HepG2 (cell line): ENCODE measurements at regions of chr10 and their contacts with region 1.

Region 1: GRCh38 chr10:93288654-93289634 is 193.2 kb downstream of the MYOF start:
- DNase-seq: peak; percentile 74
- ATAC-seq: peak; percentile 90
- H3K4me3 ChIP-seq: no peak overlapping the region
- H3K27ac ChIP-seq: no peak overlapping the region
- H3K4me1 ChIP-seq: no peaks in the 10 kb centered on the region
- H3K27me3 ChIP-seq: peaks cover 0 to 2% of the 10 kb centered on the region in 2 experiments; a peak in 1 of 5 replicates
- CTCF ChIP-seq: peak; percentile 91
- EP300 ChIP-seq: no peak
- POLR2A ChIP-seq: no peak
- RAD21 ChIP-seq: peak; percentile 86

Region 2: DNA sequence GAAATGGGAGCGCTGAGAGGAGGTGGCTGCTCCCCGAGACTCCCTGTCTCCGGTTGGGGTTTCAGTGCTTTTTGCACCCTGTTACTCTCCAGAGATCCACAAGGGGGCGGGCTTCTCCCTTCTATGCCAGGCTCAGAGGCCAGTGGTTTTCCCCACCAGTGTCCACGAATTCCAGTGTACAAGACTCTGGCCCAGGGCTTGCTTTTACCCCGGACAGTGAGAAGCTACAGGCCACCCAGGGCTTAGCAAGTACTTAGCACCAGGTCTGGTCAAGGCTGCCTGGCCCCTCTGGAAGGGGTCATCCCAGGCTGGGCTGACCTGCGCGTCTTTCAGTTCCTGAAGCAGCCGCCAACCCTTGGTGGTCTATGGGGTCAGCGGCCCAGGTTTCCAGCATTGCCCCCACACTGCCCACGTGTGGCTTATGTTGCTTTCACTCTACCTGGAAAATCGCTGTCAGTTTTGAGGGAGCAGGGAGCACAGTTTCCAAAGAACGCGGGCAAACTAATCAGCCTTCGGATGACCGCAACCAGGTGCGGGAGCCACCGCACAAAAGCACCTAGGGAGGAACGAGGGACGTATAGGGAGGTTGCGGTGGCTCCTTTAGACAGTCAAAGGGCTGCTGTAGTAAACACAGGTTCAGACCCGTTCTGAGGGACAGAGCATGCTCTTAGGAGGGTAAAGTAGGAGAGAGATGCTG is 208.4 kb before region 1 on chr10:
- CTCF ChIA-PET with region 1: interaction called, 20 read pairs
- POLR2A ChIA-PET with region 1: no interaction called
- in situ Hi-C with region 1: loop called (anchors 10 kb)
- intact Hi-C with region 1: loop called (anchors 1 kb)
- DNase-seq: peak; percentile 29
- ATAC-seq: peak; percentile 81
- H3K4me3 ChIP-seq: no peak overlapping the region
- H3K27ac ChIP-seq: no peak overlapping the region
- H3K4me1 ChIP-seq: peaks cover 41% of the 10 kb centered on the region
- H3K27me3 ChIP-seq: peaks cover 0 to 15% of the 10 kb centered on the region in 2 experiments; a peak in 2 of 5 replicates
- CTCF ChIP-seq: peak; percentile 83
- EP300 ChIP-seq: no peak
- POLR2A ChIP-seq: no peak
- RAD21 ChIP-seq: peak; percentile 80

Region 3: DNA sequence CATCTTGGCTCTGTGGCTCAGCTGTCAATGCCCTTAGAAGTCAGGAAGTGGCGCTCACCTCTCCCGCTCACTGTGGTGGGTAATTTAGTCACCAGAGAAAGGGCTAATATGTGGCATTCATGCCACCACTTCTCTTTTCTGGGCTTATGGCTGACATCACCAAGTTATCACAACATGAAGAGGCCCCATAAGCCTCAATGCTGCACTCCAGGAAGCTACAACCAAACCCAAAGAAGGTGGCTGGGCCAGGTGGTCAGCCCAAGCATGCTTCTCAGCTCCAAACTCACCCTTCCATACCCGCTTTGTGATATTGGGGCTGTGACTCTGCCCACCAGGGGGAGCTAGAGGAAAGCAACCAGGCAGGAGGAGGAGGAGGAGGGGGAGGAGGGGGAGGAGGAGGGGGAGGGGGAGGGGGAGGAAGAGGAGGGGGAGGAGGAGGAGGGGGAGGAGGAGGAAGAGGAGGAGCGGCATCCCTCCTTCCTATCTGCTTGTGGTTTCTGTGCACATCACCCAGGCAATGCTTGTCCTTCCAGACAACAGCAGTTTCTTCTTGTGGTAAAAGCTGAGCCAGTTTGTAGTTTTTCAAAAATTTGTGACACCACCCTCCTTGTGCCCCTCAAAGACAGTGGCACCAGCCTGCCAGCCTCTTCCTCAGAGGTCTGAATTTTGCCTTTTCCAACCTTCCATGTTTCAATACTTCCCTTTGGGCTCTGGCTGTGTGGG is 173.1 kb before region 1 on chr10:
- CTCF ChIA-PET with region 1: interaction called, 14 read pairs
- POLR2A ChIA-PET with region 1: no interaction called
- in situ Hi-C with region 1: no loop called
- intact Hi-C with region 1: loop called (anchors 1 kb)
- DNase-seq: peak; percentile 63
- ATAC-seq: peak; percentile 80
- H3K4me3 ChIP-seq: no peak overlapping the region
- H3K27ac ChIP-seq: no peak overlapping the region
- H3K4me1 ChIP-seq: peaks cover 16% of the 10 kb centered on the region
- H3K27me3 ChIP-seq: no peaks in the 10 kb centered on the region; a peak in 2 of 5 replicates
- CTCF ChIP-seq: peak; percentile 77
- EP300 ChIP-seq: no peak
- POLR2A ChIP-seq: no peak
- RAD21 ChIP-seq: no peak

Region 4: GRCh38 chr10:93224005-93224779 is 64.8 kb before region 1 on chr10:
- CTCF ChIA-PET with region 1: interaction called, 6 read pairs
- POLR2A ChIA-PET with region 1: no interaction called
- in situ Hi-C with region 1: no loop called
- intact Hi-C with region 1: loop called (anchors 1 kb)
- DNase-seq: no peak
- ATAC-seq: peak; percentile 76
- H3K4me3 ChIP-seq: no peak overlapping the region
- H3K27ac ChIP-seq: no peak overlapping the region
- H3K4me1 ChIP-seq: peaks cover 25% of the 10 kb centered on the region
- H3K27me3 ChIP-seq: no peaks in the 10 kb centered on the region
- CTCF ChIP-seq: peak; percentile 44
- EP300 ChIP-seq: no peak
- POLR2A ChIP-seq: no peak
- RAD21 ChIP-seq: no peak

Region 5: GRCh38 chr10:93235686-93236085 is 53.3 kb before region 1 on chr10:
- CTCF ChIA-PET with region 1: no interaction called
- POLR2A ChIA-PET with region 1: no interaction called
- in situ Hi-C with region 1: no loop called
- intact Hi-C with region 1: loop called (anchors 5 kb)
- DNase-seq: peak; percentile 89
- ATAC-seq: peak; percentile 98
- H3K4me3 ChIP-seq: no peak overlapping the region
- H3K27ac ChIP-seq: peak overlapping the region; percentile 58
- H3K4me1 ChIP-seq: peaks cover 34% of the 10 kb centered on the region
- H3K27me3 ChIP-seq: no peaks in the 10 kb centered on the region
- CTCF ChIP-seq: no peak
- EP300 ChIP-seq: peak in 1 of 2 experiments; percentile 70; a peak in 2 of 4 replicates
- POLR2A ChIP-seq: no peak
- RAD21 ChIP-seq: no peak